H1 (cell line): ENCODE measurements at regions of chr2 and their contacts with region 1.

Region 1: DNA sequence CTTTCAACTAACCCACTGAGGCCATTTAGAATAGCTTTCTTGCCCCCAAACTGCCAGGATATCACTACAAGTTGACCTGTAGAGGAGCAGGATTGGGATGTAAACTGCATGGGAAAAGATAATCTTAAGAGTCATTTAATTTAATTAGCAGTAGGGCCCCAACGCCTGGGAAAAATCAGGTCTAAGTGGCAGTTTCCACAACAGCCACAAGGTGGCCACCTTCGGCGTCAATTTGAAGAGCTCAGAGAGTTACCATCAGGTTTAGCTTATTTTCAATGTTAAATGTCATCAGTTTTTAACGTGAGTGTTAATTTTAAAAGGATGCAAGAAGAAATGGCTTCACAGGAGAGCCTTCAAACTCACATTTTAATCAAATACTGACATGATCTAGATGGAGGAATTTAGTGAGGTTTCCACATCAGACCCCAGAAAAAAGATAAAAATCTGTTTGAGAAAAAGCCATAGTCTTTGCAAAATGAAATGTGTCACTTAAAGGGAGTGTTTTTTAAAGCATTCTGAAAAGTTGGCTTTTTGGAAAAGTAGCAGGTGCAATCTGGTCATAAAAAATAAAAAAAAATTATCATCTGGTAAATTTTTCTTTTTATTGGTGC is 77.3 kb upstream of the UPP2 start:
- DNase-seq: peak in 1 of 2 experiments; percentile 79
- H3K4me3 ChIP-seq: no peak overlapping the region
- H3K27ac ChIP-seq: no peak overlapping the region
- H3K4me1 ChIP-seq: no peaks in the 10 kb centered on the region
- H3K27me3 ChIP-seq: peaks cover 0 to 4% (median 0%) of the 10 kb centered on the region in 4 experiments; a peak in 1 of 7 replicates
- CTCF ChIP-seq: peak; percentile 57 to 69 (median 68)
- EP300 ChIP-seq: no peak
- POLR2A ChIP-seq: no peak
- RAD21 ChIP-seq: peak; percentile 79 to 87

Region 2: DNA sequence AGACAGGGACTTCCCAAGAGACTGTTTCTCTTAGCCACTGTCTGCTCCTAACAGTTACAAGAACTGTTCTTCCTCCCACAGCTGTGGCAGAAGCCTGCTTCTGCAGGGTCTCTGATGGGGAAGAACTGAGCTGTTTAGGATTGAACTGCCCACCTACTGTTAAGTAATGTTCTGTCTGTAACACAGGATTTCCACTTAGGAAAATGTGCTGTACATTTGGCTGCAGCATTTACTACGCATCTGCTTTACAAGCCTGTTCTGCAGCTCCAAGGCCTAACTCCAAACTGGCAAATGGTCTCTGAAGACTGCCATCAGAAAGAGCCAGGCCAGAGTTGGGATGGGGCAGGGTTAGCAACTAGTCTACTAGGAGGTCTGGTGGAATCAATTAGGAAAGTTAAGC is 10.5 kb before region 1 on chr2:
- CTCF ChIA-PET with region 1: interaction called, 23 read pairs
- POLR2A ChIA-PET with region 1: no interaction called
- DNase-seq: no peak
- H3K4me3 ChIP-seq: no peak overlapping the region
- H3K27ac ChIP-seq: no peak overlapping the region
- H3K4me1 ChIP-seq: peaks cover 0 to 10% (median 1%) of the 10 kb centered on the region in 4 experiments; a peak in 1 of 7 replicates
- H3K27me3 ChIP-seq: 0 out of 7 replicates have a peak, but pooled peaks cover 0 to 2% (median 0%) of the 10 kb centered on the region in 4 experiments
- CTCF ChIP-seq: no peak
- EP300 ChIP-seq: no peak
- POLR2A ChIP-seq: no peak
- RAD21 ChIP-seq: no peak

Region 3: GRCh38 chr2:158045362-158045761 is 21.0 kb after region 1 on chr2:
- CTCF ChIA-PET with region 1: interaction called, 20 read pairs
- POLR2A ChIA-PET with region 1: no interaction called
- DNase-seq: no peak
- H3K4me3 ChIP-seq: no peak overlapping the region
- H3K27ac ChIP-seq: no peak overlapping the region
- H3K4me1 ChIP-seq: no peaks in the 10 kb centered on the region
- H3K27me3 ChIP-seq: no peaks in the 10 kb centered on the region
- CTCF ChIP-seq: peak; percentile 77 to 98 (median 90)
- EP300 ChIP-seq: no peak
- POLR2A ChIP-seq: no peak
- RAD21 ChIP-seq: peak; percentile 86 to 93